Activated naive CD8-positive, alpha-beta T cell treated with anti-CD3 and anti-CD28 coated beads, Interleukin-2, amount 10 ng/mL, durations not matched to agents 7 days and 5 days (primary cell): ENCODE measurements at regions of chr21 and their contacts with region 1.

Region 1: GRCh38 chr21:36310016-36310415 is 10.0 kb upstream of the MORC3 start:
- DNase-seq: no peak
- ATAC-seq: peak; percentile 60
- H3K4me3 Mint-ChIP-seq: no peak overlapping the region
- H3K27ac Mint-ChIP-seq: no peak overlapping the region
- H3K4me1 Mint-ChIP-seq: no peaks in the 10 kb centered on the region
- H3K27me3 Mint-ChIP-seq: no peaks in the 10 kb centered on the region

Region 2: DNA sequence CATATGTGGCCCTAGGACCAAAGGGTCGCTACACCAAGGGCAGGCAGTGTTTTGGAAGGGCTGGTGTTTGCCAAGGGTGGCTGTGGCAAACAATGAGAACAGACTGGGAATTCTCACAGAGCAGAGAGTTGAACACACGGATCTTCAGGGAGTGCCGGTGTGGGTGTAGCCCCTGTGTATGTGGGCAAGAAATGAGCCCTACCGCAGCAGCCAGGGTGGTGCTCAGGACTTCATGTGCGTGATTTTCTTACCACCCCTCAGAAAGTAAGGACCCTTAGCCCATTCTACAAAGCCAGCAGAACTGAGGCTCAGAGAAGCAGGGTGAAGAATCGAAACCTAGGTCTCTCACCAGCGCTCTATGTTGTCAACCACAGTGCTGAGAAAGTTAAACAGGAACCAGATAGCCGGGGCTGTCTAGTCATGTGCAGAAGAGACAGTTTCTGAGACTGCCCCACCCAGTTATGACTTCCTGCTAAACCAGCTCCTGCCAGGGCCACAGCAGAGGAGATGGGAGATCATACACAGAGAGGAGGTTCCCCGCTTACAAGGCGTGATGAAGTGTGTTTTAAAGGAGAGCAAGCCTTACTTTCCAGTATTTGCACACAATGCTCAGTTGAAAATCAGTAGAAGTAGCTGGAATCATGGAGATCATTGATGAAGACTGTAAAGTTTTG is 12.0 kb before region 1 on chr21:
- POLR2A ChIA-PET with region 1: interaction called, 11 read pairs
- DNase-seq: peak; percentile 57
- ATAC-seq: peak; percentile 100
- H3K4me3 Mint-ChIP-seq: peak overlapping the region; percentile 82
- H3K27ac Mint-ChIP-seq: peak overlapping the region; percentile 98
- H3K4me1 Mint-ChIP-seq: peaks cover 26% of the 10 kb centered on the region
- H3K27me3 Mint-ChIP-seq: no peaks in the 10 kb centered on the region

Region 3: DNA sequence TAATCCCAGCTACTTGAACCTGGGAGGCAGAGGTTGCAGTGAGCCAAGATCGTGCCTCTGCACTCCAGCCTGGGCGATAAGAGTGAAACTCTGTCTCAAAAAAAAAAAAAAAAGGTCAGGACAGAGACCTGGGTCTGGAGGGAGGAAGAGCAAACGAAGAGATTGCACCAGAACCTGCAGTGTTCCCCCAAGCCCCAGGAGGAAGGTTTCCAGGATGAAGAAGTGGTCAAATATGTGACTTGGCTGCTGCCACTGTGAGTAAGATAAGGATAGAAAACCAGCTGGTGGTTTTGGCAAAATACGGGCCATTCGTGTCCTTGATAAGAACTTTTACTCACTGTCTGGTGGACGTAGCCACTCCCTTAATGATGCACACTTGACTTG is 127.7 kb after region 1 on chr21:
- POLR2A ChIA-PET with region 1: no interaction called
- DNase-seq: no peak
- ATAC-seq: no peak
- H3K4me3 Mint-ChIP-seq: no peak overlapping the region
- H3K27ac Mint-ChIP-seq: no peak overlapping the region
- H3K4me1 Mint-ChIP-seq: no peaks in the 10 kb centered on the region
- H3K27me3 Mint-ChIP-seq: peaks cover 11% of the 10 kb centered on the region

Region 4: DNA sequence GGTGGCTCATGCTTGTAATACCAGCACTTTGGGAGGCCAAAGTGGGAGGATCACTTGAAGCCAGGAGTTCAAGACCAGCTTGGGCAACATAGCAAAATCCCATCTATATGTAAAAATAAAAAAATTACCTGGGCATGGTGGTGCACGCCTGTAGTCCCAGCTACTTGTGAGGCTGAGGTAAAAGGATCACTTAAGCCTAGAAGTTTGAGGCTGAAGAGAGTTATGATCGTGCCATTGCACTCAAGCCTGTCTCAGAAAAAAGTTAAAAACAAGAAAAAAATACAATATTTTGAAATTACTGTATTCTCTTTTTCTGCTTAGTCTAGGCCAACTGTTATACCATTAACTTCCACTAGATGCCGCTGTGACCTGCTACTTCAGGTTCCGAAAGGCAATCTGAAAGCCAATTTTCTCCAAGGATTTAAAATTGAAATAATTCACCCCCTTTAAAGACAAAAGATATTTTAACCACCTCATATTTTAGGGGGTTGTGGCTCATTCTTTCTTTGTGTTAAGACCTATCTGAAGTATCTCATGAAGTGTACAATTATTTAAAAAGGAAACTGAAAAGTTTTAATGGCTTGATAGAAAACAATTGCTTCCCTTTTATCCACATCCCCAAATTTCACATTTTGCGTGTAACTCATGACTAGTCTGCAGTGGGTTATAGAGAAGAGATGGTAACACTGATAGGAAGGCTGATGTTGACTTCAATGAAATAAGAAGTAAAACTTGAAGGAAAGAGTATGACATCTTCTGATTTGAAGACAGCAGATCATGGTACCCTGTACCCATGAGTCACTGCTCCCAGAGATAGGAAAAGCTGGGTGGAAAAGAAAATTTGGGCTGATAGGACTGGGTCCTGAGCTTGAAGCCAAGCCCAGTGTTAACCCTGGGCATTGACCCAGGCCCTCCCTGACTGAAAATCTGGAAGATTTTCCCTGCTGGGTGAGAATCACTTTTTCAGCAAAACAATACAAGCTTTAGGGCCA is 194.3 kb after region 1 on chr21:
- POLR2A ChIA-PET with region 1: no interaction called
- DNase-seq: no peak
- ATAC-seq: no peak
- H3K4me3 Mint-ChIP-seq: no peak overlapping the region
- H3K27ac Mint-ChIP-seq: no peak overlapping the region
- H3K4me1 Mint-ChIP-seq: no peaks in the 10 kb centered on the region
- H3K27me3 Mint-ChIP-seq: peaks cover 11% of the 10 kb centered on the region